Right ventricle myocardium inferior (tissue), 1 donor: ENCODE measurements at regions of chr7 and their contacts with region 1.

Region 1: GRCh38 chr7:12638851-12639467 is 48.5 kb upstream of the ARL4A start:
- DNase-seq: no peak
- ATAC-seq: no peak

Region 2: GRCh38 chr7:13262929-13263530 is 624.1 kb after region 1 on chr7:
- intact Hi-C with region 1: loop called (anchors 2 kb)
- DNase-seq: no peak
- ATAC-seq: no peak